ENCODE measurements at regions of chr12 and their contacts with region 1.

Region 1: DNA sequence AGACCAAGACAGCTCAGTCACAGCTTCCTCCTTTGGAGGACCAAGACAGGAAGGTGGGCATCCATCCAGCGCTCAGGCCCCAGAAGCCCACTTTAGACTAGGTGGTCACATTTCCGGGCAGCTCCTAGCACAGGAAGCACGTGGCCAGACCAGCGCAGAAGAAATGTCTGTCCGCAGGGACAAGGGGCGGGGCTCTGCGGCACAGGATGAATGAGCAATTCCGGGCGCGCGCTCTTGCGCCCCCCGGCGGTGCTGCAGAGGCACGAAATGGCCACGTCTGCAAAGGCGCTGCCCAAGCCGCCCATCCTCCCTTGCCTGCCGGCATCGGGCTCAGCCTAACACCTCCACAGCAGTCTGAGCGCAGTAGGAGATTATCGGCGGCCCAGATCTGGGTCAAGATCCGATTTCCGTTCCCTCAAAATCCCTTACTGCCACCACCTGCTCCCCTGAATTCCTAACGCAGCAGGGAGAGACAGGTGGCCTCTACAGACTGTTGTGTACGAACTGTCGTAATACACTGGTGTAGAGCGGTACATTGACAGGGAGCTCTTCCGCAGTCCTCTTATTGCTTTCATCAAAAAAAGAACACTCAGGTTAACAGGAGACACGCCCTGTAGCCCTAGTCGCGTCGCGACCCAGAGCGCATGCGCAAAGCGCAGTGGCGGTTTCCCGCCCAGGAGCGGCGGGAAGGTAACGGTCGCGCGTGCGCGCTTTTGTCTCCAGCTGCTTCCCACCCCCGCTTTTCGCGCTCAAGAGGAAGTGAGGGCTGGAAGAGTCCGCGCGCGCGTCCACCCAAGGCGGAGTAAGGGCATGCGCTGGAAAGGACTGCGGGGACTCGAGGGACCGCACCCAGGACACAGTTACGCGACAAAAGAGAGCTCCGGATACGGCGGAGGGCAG is 794 bp downstream of the TUBA1B start:
- DNase-seq: peak; percentile 96
- H3K4me3 Mint-ChIP-seq: peak overlapping the region; percentile 97
- H3K27ac Mint-ChIP-seq: peak overlapping the region; percentile 99
- H3K4me1 Mint-ChIP-seq: peaks cover 46% of the 10 kb centered on the region
- H3K27me3 Mint-ChIP-seq: peaks cover 7% of the 10 kb centered on the region

Region 2: GRCh38 chr12:48716493-48717251 is 413.7 kb before region 1 on chr12 and contains the start of gene CCNT1:
- CTCF ChIA-PET with region 1: no interaction called
- POLR2A ChIA-PET with region 1: no interaction called
- intact Hi-C with region 1: loop called (anchors 2 kb)
- DNase-seq: peak; percentile 100
- H3K4me3 Mint-ChIP-seq: peak within 1 kb of the TSS; percentile 98
- H3K27ac Mint-ChIP-seq: peak within 1 kb of the TSS; percentile 99
- H3K4me1 Mint-ChIP-seq: peaks cover 39% of the 10 kb centered on the region
- H3K27me3 Mint-ChIP-seq: no peaks in the 10 kb centered on the region
- total RNA-seq, gene CCNT1: 66.2 to 73.3 TPM

Region 3: GRCh38 chr12:49110464-49111155 is 19.8 kb before region 1 on chr12 and contains the start of gene LMBR1L:
- CTCF ChIA-PET with region 1: interaction called, 32 read pairs
- POLR2A ChIA-PET with region 1: interaction called, 47 read pairs
- intact Hi-C with region 1: loop called (anchors 1 kb)
- DNase-seq: peak; percentile 97
- H3K4me3 Mint-ChIP-seq: peak within 1 kb of the TSS; percentile 95
- H3K27ac Mint-ChIP-seq: peak within 1 kb of the TSS; percentile 80
- H3K4me1 Mint-ChIP-seq: peaks cover 24% of the 10 kb centered on the region
- H3K27me3 Mint-ChIP-seq: no peaks in the 10 kb centered on the region
- total RNA-seq, gene LMBR1L: 55.0 to 59.1 TPM

Region 4: GRCh38 chr12:49232940-49233841 is 102.8 kb after region 1 on chr12:
- CTCF ChIA-PET with region 1: interaction called, 32 read pairs
- POLR2A ChIA-PET with region 1: interaction called, 5 read pairs
- intact Hi-C with region 1: loop called (anchors 2 kb)
- DNase-seq: no peak
- H3K4me3 Mint-ChIP-seq: no peak overlapping the region
- H3K27ac Mint-ChIP-seq: no peak overlapping the region
- H3K4me1 Mint-ChIP-seq: peaks cover 16% of the 10 kb centered on the region
- H3K27me3 Mint-ChIP-seq: no peaks in the 10 kb centered on the region

Region 5: DNA sequence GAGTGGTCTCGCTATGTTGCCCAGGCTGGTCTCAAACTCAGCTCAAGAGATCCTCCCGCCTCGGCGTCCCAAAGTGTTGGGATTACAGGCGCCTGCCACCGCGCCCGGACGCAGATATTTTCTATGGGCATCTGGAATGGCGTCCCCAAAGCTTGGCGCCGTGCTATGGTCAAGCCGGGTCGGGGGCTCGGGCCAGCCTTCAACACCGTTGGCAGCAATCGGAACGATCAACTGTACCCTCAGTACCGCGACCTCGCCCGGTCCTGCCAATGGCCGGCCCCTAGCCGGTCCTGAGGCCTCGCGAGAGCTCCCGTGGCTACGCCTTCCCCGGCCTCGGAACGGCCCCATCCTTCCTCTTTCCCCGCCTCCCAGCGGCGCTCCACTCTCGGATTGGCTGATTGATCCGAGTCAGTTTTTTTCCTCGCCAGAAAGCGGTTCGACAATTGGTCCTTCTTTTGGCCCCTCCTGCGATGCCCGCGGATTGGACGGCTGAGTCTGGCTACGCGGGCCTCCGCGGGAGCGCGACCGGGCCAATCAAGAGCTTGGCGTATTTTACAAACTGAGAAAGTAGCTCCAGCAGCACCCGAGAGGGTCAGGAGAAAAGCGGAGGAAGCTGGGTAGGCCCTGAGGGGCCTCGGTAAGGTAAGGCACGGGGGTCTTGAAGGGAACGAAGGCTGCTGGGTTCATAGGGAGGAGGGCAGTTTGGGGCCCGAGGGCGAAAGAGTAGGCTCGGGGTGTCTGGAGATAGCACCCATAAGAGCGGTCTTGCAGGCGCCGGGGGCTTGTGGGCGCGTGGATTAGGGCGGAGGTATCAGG is 192.5 kb after region 1 on chr12 and contains the start of gene TROAP:
- CTCF ChIA-PET with region 1: no interaction called
- POLR2A ChIA-PET with region 1: interaction called, 9 read pairs
- intact Hi-C with region 1: loop called (anchors 1 kb)
- DNase-seq: peak; percentile 99
- H3K4me3 Mint-ChIP-seq: peak within 1 kb of the TSS; percentile 99
- H3K27ac Mint-ChIP-seq: peak within 1 kb of the TSS; percentile 90
- H3K4me1 Mint-ChIP-seq: peaks cover 19% of the 10 kb centered on the region
- H3K27me3 Mint-ChIP-seq: no peaks in the 10 kb centered on the region
- total RNA-seq, gene TROAP: 57.7 to 64.9 TPM

Measured in activated CD4-positive, alpha-beta memory T cell treated with anti-CD3 and anti-CD28 coated beads for 36 hours (primary cell).